ENCODE measurements at regions of chr1 and their contacts with region 1.

Region 1: DNA sequence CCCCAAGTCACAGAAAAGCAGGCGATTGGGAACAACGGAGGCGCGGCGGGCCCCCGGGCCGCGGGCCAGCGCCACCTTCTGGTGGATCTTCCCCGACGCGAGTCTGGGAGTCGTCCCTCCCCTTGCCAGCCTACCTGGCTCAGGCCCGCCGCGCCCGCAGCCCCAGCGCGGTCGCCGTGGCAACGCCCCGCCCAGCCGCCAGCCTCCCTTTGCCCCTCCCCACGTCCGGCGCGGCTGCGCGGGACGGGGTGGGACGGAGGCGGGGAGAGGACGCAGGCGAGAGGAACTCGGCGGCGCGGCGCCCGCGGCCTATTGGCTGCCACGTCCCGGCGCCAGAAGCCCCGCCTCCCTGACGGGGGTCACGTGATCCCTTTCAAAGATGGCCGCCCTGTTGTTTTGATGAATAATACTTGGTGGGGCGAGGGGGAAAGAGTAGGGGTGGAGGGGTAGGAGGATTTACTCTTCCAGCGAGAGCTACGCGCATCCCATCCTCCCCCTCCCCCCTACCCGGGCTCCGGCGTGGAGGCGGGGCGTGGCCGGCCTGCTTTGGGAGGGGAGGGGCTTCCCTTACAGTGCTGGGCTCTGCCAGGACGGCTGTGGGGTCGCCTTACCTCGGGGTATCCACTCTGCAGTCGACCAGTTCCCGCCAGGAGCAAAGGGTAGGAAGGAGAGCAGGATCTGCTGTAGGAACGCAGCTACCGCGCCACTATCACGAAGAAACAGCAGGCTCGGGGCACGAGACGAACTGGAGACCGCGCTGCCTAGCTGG is at the start of gene UBE4B:
- DNase-seq: peak; percentile 99
- ATAC-seq: peak; percentile 96
- H3K4me3 Mint-ChIP-seq: peak within 1 kb of the TSS; percentile 88
- H3K27ac Mint-ChIP-seq: peak within 1 kb of the TSS; percentile 74
- H3K4me1 Mint-ChIP-seq: peaks cover 24% of the 10 kb centered on the region
- H3K27me3 Mint-ChIP-seq: no peaks in the 10 kb centered on the region
- total RNA-seq, gene UBE4B: 26.1 to 31.8 TPM

Region 2: DNA sequence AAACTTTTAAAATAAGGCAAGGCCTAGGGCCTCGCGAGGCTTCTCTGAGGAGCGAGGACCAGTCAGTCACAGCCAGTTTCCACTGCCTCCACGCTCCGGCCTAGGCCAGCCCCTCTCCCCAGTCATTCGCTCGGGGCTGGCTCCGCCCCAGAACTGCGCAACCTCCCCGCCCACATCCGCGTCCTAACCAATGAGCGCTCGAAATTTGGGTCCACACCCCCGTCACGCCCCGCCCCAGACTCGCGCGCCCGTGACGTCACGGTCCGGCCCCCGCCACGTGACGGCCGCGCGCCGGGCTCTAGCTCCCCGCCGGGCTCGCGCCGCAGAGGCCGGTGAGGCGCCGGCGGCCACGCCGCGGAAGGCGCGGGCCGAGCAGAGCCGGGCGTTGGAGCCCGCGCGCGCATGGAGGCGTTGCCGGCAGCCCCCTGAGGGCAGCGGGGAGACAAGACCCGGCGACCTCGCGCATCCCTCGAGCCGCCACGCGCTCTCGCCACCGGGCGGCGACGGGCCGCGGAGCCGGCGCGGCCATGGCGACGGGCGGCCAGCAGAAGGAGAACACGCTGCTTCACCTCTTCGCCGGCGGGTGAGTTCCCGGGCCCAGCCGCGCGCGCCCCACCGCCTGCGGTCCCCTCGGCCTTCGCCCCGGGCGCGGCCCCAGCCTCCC is 493.5 kb before region 1 on chr1 and contains the start of gene SLC25A33:
- CTCF ChIA-PET with region 1: no interaction called
- POLR2A ChIA-PET with region 1: no interaction called
- intact Hi-C with region 1: loop called in 1 of 2 experiments (anchors 1 kb)
- DNase-seq: peak; percentile 99
- ATAC-seq: peak; percentile 99
- H3K4me3 Mint-ChIP-seq: peak within 1 kb of the TSS; percentile 80
- H3K27ac Mint-ChIP-seq: peak within 1 kb of the TSS; percentile 78
- H3K4me1 Mint-ChIP-seq: peaks cover 30% of the 10 kb centered on the region
- H3K27me3 Mint-ChIP-seq: no peaks in the 10 kb centered on the region
- total RNA-seq, gene SLC25A33: 4.4 to 6.1 TPM

Region 3: DNA sequence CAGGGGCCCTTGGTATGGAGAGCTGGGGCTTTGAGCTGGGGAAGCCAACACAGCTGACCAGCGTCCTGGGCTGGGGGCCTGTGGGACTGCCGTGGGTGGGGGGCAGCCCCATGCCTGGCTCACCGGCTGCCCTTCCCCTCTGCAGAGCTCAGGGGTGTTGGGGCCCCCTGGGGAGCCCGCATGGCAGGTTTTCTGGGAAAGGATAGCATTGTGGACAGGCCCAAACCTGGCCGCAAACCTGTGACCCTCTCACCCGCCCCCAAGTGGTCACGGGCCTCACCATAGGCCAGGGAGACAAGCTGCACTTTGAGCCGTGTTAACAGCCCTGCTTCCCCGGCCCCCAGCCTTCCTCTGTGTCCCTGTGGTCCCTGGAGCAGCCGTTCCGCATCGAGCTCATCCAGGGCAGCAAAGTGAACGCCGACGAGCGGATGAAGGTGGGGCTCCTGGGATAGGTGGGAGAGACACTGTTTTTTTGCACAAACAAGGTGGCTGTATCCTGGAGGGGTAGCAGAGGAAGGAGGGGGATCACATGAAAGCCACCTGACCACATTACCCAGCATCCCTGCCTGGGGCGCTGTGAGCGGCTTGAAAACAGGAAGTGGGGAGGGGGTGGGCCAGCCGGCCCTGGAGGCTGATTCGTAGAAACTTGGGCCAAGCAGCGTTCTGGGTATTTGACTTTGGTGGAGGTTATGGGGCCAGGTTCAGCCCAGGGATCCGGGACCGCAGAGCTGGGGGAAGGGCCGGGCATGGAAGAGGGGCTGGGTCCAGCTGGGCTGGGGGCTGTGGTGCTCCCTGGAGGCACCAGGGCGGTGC is 315.4 kb before region 1 on chr1:
- CTCF ChIA-PET with region 1: no interaction called
- POLR2A ChIA-PET with region 1: no interaction called
- intact Hi-C with region 1: loop called in 1 of 2 experiments (anchors 5 kb)
- DNase-seq: peak; percentile 93
- ATAC-seq: peak; percentile 81
- H3K4me3 Mint-ChIP-seq: peak overlapping the region; percentile 76
- H3K27ac Mint-ChIP-seq: peak overlapping the region; percentile 93
- H3K4me1 Mint-ChIP-seq: peaks cover 62% of the 10 kb centered on the region
- H3K27me3 Mint-ChIP-seq: no peaks in the 10 kb centered on the region

Region 4: GRCh38 chr1:9874959-9875635 is 157.7 kb before region 1 on chr1:
- CTCF ChIA-PET with region 1: interaction called, 3 read pairs
- POLR2A ChIA-PET with region 1: no interaction called
- intact Hi-C with region 1: loop called (anchors 1 to 2 kb)
- DNase-seq: peak; percentile 86
- ATAC-seq: peak; percentile 96
- H3K4me3 Mint-ChIP-seq: no peak overlapping the region
- H3K27ac Mint-ChIP-seq: no peak overlapping the region
- H3K4me1 Mint-ChIP-seq: peaks cover 3% of the 10 kb centered on the region
- H3K27me3 Mint-ChIP-seq: no peaks in the 10 kb centered on the region

Region 5: DNA sequence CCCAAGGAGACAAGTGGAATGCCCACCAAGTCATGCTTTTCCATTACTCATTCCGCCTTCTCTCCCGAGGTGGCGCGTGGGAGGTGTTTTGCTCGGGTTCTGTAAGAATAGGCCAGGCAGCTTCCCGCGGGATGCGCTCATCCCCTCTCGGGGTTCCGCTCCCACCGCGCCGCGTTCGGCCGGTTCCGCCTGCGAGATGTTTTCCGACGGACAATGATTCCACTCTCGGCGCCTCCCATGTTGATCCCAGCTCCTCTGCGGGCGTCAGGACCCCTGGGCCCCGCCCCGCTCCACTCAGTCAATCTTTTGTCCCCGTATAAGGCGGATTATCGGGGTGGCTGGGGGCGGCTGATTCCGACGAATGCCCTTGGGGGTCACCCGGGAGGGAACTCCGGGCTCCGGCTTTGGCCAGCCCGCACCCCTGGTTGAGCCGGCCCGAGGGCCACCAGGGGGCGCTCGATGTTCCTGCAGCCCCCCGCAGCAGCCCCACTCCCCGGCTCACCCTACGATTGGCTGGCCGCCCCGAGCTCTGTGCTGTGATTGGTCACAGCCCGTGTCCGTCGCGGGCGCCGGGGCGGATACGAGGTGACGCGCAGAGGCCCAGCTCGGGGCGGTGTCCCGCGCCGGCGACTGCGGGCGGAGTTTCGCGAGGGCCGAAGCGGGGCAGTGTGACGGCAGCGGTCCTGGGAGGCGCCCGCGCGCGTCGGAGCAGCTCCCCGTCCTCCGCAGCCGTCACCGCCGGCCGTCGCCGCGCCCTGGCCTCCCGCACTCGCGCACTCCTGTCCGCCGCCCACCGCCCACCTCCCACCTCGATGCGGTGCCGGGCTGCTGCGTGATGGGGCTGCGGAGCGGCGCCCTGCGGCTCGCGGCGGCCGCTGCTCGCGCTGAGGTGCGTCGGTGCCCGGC is 177.4 kb after region 1 on chr1 and contains the start of gene KIF1B:
- CTCF ChIA-PET with region 1: no interaction called
- POLR2A ChIA-PET with region 1: no interaction called
- intact Hi-C with region 1: loop called in 1 of 2 experiments (anchors 1 kb)
- DNase-seq: peak; percentile 97
- ATAC-seq: peak; percentile 98
- H3K4me3 Mint-ChIP-seq: peak within 1 kb of the TSS; percentile 76
- H3K27ac Mint-ChIP-seq: peak within 1 kb of the TSS; percentile 74
- H3K4me1 Mint-ChIP-seq: peaks cover 31% of the 10 kb centered on the region
- H3K27me3 Mint-ChIP-seq: no peaks in the 10 kb centered on the region
- total RNA-seq, gene KIF1B: 12.3 to 13.5 TPM

Region 6: GRCh38 chr1:10472220-10473144 is 439.7 kb after region 1 on chr1 and contains the start of gene DFFA:
- CTCF ChIA-PET with region 1: no interaction called
- POLR2A ChIA-PET with region 1: no interaction called
- intact Hi-C with region 1: loop called in 1 of 2 experiments (anchors 1 kb)
- DNase-seq: peak; percentile 96
- ATAC-seq: peak; percentile 83
- H3K4me3 Mint-ChIP-seq: peak within 1 kb of the TSS; percentile 97
- H3K27ac Mint-ChIP-seq: peak within 1 kb of the TSS; percentile 92
- H3K4me1 Mint-ChIP-seq: peaks cover 38% of the 10 kb centered on the region
- H3K27me3 Mint-ChIP-seq: no peaks in the 10 kb centered on the region
- total RNA-seq, gene DFFA: 45.7 to 46.4 TPM

Region 7: DNA sequence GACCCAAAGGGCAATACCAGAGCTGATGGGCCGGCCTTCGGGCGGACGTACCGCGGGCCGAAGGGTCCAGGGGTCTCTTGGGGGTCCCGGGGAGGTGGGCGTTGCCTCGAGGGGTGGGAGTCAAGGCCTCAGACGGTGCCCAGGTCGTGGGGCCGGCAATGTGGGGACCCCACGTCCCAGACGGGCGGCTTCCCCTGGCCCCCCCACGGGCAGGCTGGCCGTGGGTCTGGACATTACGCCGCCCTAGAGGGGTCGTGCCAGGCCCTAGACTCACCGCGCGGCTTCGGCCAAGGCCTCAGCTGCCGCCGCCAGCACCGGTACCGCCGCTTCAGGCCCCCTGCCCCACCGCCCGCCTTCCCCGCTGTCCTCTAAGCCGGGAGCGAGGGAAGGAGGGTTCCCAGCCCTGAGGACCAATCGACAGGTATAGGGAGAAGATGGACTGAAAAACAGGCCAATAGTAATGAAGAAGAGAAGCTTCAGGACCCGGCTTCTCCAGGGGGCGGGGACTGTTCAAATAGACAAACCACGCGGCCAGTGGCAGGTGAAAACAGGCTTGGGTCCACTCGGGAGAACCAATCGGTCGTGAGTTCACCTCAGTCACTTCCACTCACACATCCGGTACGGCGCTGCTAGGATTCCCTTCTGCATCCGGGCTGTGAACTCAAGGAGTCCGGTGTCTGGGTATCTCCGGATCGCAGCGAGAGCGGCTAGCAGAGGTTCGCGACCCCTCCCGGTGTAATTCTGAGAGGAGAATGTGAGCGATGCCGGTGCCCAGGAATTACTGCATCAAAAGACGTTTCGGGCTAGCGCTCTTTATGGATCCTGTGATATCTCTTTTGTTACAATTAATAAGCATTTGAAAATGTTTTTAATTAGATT is 1229.6 kb after region 1 on chr1 and contains the start of gene MTOR:
- CTCF ChIA-PET with region 1: no interaction called
- POLR2A ChIA-PET with region 1: no interaction called
- intact Hi-C with region 1: loop called in 1 of 2 experiments (anchors 2 kb)
- DNase-seq: peak; percentile 98
- ATAC-seq: peak; percentile 98
- H3K4me3 Mint-ChIP-seq: peak within 1 kb of the TSS; percentile 90
- H3K27ac Mint-ChIP-seq: peak within 1 kb of the TSS; percentile 87
- H3K4me1 Mint-ChIP-seq: peaks cover 15% of the 10 kb centered on the region
- H3K27me3 Mint-ChIP-seq: no peaks in the 10 kb centered on the region
- total RNA-seq, gene MTOR: 32.3 to 36.3 TPM